Endothelial cell of umbilical vein (primary cell): ENCODE measurements at regions of chr13 and their contacts with region 1.

Region 1: DNA sequence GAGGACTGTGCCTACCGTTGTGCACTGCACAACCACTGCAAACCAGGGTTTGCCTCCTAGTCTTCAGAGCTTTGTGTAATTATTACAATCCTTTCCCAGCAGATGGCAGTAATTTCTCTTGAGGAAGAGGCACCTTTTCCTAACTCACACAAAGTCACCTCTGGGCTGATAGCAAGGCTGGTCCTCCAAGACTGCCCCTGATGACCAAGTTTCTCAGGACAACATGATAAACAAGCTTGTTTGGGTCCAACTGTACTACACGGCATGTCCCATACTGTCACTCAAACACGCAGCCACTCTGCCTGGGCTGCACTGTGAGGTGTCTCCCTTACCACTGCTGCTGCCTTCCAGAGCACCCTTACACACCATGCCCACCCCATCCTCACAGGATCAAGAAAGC is 39.3 kb downstream of the RFXAP start:
- DNase-seq: peak; percentile 68
- H3K4me3 ChIP-seq: no peak overlapping the region
- H3K27ac ChIP-seq: no peak overlapping the region
- H3K4me1 ChIP-seq: peaks cover 17% of the 10 kb centered on the region
- H3K27me3 ChIP-seq: no peaks in the 10 kb centered on the region
- CTCF ChIP-seq: peak; percentile 38 to 52
- POLR2A ChIP-seq: no peak

Region 2: DNA sequence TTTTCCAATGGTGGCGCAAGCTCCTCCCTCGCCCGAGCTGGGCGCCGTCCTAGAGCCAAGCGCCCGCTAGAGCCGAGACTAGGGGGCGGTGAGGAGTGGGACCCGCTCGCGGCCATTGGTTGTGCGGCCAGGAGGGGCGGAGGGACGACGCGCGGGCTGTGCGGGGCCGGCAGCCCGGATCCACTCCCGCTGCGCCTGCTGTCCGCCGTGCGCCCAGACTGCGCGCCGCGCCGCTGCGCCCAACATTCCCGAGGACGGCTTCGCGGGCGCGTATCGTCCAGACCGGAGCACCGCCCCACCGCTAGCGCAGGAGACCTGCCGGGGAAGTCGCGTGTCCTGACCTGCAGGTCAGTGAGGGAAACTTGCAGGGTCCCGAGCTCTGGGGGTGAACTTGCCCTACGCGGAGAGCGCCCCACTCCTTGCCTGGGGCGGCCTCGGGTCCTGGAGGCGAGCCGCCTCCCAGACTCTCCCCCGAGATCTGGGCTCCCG is 184.4 kb before region 1 on chr13 and contains the start of gene SERTM1:
- CTCF ChIA-PET with region 1: no interaction called
- POLR2A ChIA-PET with region 1: no interaction called
- dilution Hi-C with region 1: no loop called
- intact Hi-C with region 1: no loop called
- DNase-seq: peak; percentile 16
- H3K4me3 ChIP-seq: no peak within 1 kb of the TSS
- H3K27ac ChIP-seq: no peak within 1 kb of the TSS
- H3K4me1 ChIP-seq: peaks cover 8% of the 10 kb centered on the region
- H3K27me3 ChIP-seq: peaks cover 26 to 52% of the 10 kb centered on the region in 2 experiments
- CTCF ChIP-seq: no peak
- POLR2A ChIP-seq: no peak
- total RNA-seq, gene SERTM1: not detected in 2 replicates

Region 3: GRCh38 chr13:36875431-36875830 is 17.1 kb after region 1 on chr13:
- CTCF ChIA-PET with region 1: interaction called, 22 read pairs
- POLR2A ChIA-PET with region 1: no interaction called
- dilution Hi-C with region 1: no loop called
- intact Hi-C with region 1: no loop called
- DNase-seq: no peak
- H3K4me3 ChIP-seq: no peak overlapping the region
- H3K27ac ChIP-seq: no peak overlapping the region
- H3K4me1 ChIP-seq: no peaks in the 10 kb centered on the region
- H3K27me3 ChIP-seq: no peaks in the 10 kb centered on the region
- CTCF ChIP-seq: no peak
- POLR2A ChIP-seq: no peak

Region 4: DNA sequence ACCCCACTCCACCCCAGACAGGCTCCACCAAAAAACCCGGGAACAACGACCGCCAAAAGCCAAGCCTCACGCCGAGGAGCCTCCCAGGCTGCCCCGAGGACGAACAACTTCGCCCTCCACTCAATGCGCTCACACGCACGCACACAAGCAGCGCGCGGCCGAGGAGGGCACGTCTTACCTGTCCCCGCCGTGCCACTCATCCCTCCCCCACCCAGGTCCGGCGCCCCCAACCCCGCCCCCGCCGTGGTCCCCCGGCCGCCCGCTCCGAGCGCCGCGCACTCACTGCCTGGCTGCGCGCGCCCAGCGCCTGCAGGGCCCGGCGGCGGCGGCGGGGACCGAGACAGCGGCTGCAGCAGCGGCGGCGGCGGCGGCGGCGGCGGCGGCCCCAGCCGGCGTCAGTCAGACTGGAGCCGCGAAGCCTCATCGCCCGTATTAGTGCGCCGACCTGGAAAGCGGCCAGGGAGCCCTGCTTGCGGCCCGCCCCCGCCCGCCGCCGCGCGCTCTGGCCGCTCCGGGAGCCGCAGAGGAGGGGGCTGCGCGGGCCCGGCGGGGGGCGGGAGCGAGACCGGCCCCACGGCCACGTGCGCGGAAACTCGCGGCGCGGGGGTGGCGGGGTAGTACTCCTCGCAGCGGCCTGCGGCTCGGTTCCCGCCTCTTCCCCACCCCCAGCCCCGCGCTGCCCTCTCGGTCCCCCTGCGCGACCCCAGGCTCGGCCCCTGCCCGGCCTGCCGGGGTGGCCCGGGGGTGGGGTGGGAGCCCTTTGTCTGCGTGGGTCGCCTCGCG is 61.7 kb after region 1 on chr13 and contains the start of gene SMAD9:
- CTCF ChIA-PET with region 1: interaction called, 8 read pairs
- POLR2A ChIA-PET with region 1: no interaction called
- dilution Hi-C with region 1: no loop called
- intact Hi-C with region 1: loop called (anchors 2 kb)
- DNase-seq: peak; percentile 58
- H3K4me3 ChIP-seq: peak within 1 kb of the TSS; percentile 82 to 97 (median 92)
- H3K27ac ChIP-seq: peak within 1 kb of the TSS; percentile 69
- H3K4me1 ChIP-seq: peaks cover 11% of the 10 kb centered on the region
- H3K27me3 ChIP-seq: no peaks in the 10 kb centered on the region
- CTCF ChIP-seq: no peak
- POLR2A ChIP-seq: no peak
- total RNA-seq, gene SMAD9: 4.2 and 4.5 TPM in 2 replicates

Region 5: GRCh38 chr13:36954542-36954941 is 96.3 kb after region 1 on chr13:
- CTCF ChIA-PET with region 1: interaction called, 14 read pairs
- POLR2A ChIA-PET with region 1: no interaction called
- dilution Hi-C with region 1: no loop called
- intact Hi-C with region 1: no loop called
- DNase-seq: peak; percentile 68
- H3K4me3 ChIP-seq: no peak overlapping the region
- H3K27ac ChIP-seq: peak overlapping the region; percentile 55
- H3K4me1 ChIP-seq: peaks cover 24% of the 10 kb centered on the region
- H3K27me3 ChIP-seq: no peaks in the 10 kb centered on the region
- CTCF ChIP-seq: no peak
- POLR2A ChIP-seq: no peak

Region 6: DNA sequence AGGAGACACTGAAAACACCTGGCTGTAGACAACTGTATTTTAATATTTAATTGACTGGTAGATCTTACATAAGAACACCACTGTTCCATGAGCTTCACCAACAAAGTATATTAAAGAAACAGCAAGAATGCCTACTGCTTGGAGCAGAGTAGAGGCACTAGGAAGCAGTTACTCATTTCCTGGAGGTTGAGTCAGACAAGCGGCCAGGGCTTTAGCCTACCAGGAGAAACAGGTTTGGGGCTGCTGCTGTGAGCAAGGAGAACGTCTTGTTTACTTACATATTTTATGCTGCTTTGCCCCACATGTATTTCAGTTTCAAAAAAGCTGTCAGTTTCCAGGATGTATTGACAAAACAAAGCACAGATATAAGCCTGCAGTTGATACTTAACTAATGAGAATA is 107.5 kb after region 1 on chr13:
- CTCF ChIA-PET with region 1: interaction called, 33 read pairs
- POLR2A ChIA-PET with region 1: no interaction called
- dilution Hi-C with region 1: no loop called
- intact Hi-C with region 1: no loop called
- DNase-seq: peak; percentile 95
- H3K4me3 ChIP-seq: no peak overlapping the region
- H3K27ac ChIP-seq: peak overlapping the region; percentile 93
- H3K4me1 ChIP-seq: peaks cover 33% of the 10 kb centered on the region
- H3K27me3 ChIP-seq: no peaks in the 10 kb centered on the region
- CTCF ChIP-seq: no peak
- POLR2A ChIP-seq: no peak

Region 7: GRCh38 chr13:36999054-36999714 is 140.9 kb after region 1 on chr13 and contains the start of gene ALG5:
- CTCF ChIA-PET with region 1: interaction called, 7 read pairs
- POLR2A ChIA-PET with region 1: no interaction called
- dilution Hi-C with region 1: loop called (anchors 25 kb)
- intact Hi-C with region 1: no loop called
- DNase-seq: peak; percentile 94
- H3K4me3 ChIP-seq: peak within 1 kb of the TSS; percentile 89 to 97 (median 94)
- H3K27ac ChIP-seq: peak within 1 kb of the TSS; percentile 94
- H3K4me1 ChIP-seq: peaks cover 21% of the 10 kb centered on the region
- H3K27me3 ChIP-seq: no peaks in the 10 kb centered on the region
- CTCF ChIP-seq: peak; percentile 81 to 99
- POLR2A ChIP-seq: peak; percentile 94
- total RNA-seq, gene ALG5: 29.3 and 31.3 TPM in 2 replicates